Panc1 (cell line): ENCODE measurements at regions of chr10 and their contacts with region 1.

Region 1: GRCh38 chr10:52853704-52854103 is 81.1 kb upstream of the MBL2 start:
- DNase-seq: no peak
- ATAC-seq: no peak
- H3K4me3 ChIP-seq: no peak overlapping the region
- H3K27ac ChIP-seq: no peak overlapping the region
- H3K4me1 ChIP-seq: no peaks in the 10 kb centered on the region
- H3K27me3 ChIP-seq: no peaks in the 10 kb centered on the region
- CTCF ChIP-seq: no peak

Region 2: DNA sequence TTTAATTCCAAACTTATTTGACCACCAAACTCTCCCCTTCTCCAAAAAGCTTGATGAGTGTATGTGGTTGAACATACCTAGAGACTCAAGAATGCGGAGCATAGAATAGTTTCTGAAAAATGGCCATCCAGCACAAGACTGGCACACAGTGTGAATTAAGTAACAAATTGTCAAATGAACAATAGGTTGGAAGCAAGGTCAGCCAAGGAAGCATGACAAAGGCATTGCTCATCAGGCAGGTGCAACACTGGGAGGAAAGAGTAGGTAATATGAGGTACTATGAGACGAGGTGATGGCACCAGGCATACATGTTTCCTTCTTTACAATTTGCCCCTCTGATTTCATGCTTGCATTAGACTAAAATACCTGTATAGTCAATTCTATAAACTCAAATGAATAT is 466.0 kb before region 1 on chr10:
- CTCF ChIA-PET with region 1: interaction called, 10 read pairs
- POLR2A ChIA-PET with region 1: no interaction called
- in situ Hi-C with region 1: no loop called
- intact Hi-C with region 1: no loop called
- DNase-seq: no peak
- ATAC-seq: no peak
- H3K4me3 ChIP-seq: no peak overlapping the region
- H3K27ac ChIP-seq: no peak overlapping the region; the same call in 1 of the 2 replicates
- H3K4me1 ChIP-seq: no peaks in the 10 kb centered on the region
- H3K27me3 ChIP-seq: no peaks in the 10 kb centered on the region
- CTCF ChIP-seq: no peak

Region 3: GRCh38 chr10:52883996-52884871 is 30.5 kb after region 1 on chr10:
- CTCF ChIA-PET with region 1: no interaction called
- POLR2A ChIA-PET with region 1: no interaction called
- in situ Hi-C with region 1: no loop called
- intact Hi-C with region 1: no loop called
- DNase-seq: peak; percentile 61
- ATAC-seq: peak; percentile 96
- H3K4me3 ChIP-seq: peak overlapping the region; percentile 17 to 40; a peak in 3 of 4 replicates
- H3K27ac ChIP-seq: peak overlapping the region; percentile 74
- H3K4me1 ChIP-seq: peaks cover 7% of the 10 kb centered on the region
- H3K27me3 ChIP-seq: no peaks in the 10 kb centered on the region
- CTCF ChIP-seq: peak; percentile 93